ENCODE measurements at regions of chr13 and their contacts with region 1.

Region 1: DNA sequence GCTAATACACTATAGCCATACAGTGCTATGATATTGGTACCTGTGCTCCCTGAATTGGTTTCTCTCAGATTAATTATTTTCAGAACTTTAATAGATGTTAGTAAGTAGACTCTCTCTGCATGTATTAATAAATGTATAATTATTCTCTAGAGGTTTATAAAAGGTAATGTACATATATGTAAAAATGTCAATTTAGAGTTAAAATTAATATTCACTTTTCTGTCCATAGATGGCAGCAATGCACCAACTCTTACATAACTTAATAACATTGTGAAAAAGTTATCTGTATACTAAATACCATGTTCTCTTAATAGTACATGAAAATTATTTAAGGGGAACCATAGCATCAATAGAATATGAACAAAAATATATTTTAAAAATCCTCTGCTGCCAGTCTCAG is 515.0 kb upstream of the KLHL1 start:
- DNase-seq: peak; percentile 57
- H3K4me3 ChIP-seq: no peak overlapping the region
- H3K27ac ChIP-seq: no peak overlapping the region
- H3K4me1 ChIP-seq: no peaks in the 10 kb centered on the region
- H3K27me3 ChIP-seq: no peaks in the 10 kb centered on the region
- CTCF ChIP-seq: no peak
- POLR2A ChIP-seq: no peak

Region 2: GRCh38 chr13:70708775-70709174 is 85.5 kb after region 1 on chr13:
- CTCF ChIA-PET with region 1: no interaction called
- POLR2A ChIA-PET with region 1: no interaction called
- dilution Hi-C with region 1: no loop called
- intact Hi-C with region 1: loop called (anchors 2 kb)
- DNase-seq: peak; percentile 93
- H3K4me3 ChIP-seq: peak overlapping the region in 1 of 3 experiments; percentile 11
- H3K27ac ChIP-seq: peak overlapping the region; percentile 53
- H3K4me1 ChIP-seq: peaks cover 28% of the 10 kb centered on the region
- H3K27me3 ChIP-seq: no peaks in the 10 kb centered on the region
- CTCF ChIP-seq: no peak
- POLR2A ChIP-seq: no peak

Region 3: GRCh38 chr13:70723732-70724131 is 100.5 kb after region 1 on chr13:
- CTCF ChIA-PET with region 1: no interaction called
- POLR2A ChIA-PET with region 1: no interaction called
- dilution Hi-C with region 1: no loop called
- intact Hi-C with region 1: loop called (anchors 5 kb)
- DNase-seq: peak; percentile 62
- H3K4me3 ChIP-seq: no peak overlapping the region
- H3K27ac ChIP-seq: no peak overlapping the region
- H3K4me1 ChIP-seq: no peaks in the 10 kb centered on the region
- H3K27me3 ChIP-seq: no peaks in the 10 kb centered on the region
- CTCF ChIP-seq: peak in 1 of 2 donors; percentile 28
- POLR2A ChIP-seq: no peak

Region 4: GRCh38 chr13:71218960-71219359 is 595.7 kb after region 1 on chr13:
- CTCF ChIA-PET with region 1: no interaction called
- POLR2A ChIA-PET with region 1: no interaction called
- dilution Hi-C with region 1: no loop called
- intact Hi-C with region 1: loop called (anchors 5 kb)
- DNase-seq: peak; percentile 49
- H3K4me3 ChIP-seq: no peak overlapping the region
- H3K27ac ChIP-seq: no peak overlapping the region
- H3K4me1 ChIP-seq: peaks cover 2% of the 10 kb centered on the region
- H3K27me3 ChIP-seq: no peaks in the 10 kb centered on the region
- CTCF ChIP-seq: no peak
- POLR2A ChIP-seq: no peak

Region 5: GRCh38 chr13:71477735-71478134 is 854.5 kb after region 1 on chr13:
- CTCF ChIA-PET with region 1: interaction called, 3 read pairs
- POLR2A ChIA-PET with region 1: no interaction called
- dilution Hi-C with region 1: no loop called
- intact Hi-C with region 1: loop called (anchors 1 kb)
- DNase-seq: no peak
- H3K4me3 ChIP-seq: no peak overlapping the region
- H3K27ac ChIP-seq: no peak overlapping the region
- H3K4me1 ChIP-seq: no peaks in the 10 kb centered on the region
- H3K27me3 ChIP-seq: no peaks in the 10 kb centered on the region
- CTCF ChIP-seq: peak; percentile 13 to 23
- POLR2A ChIP-seq: no peak

Region 6: GRCh38 chr13:71979616-71980015 is 1356.4 kb after region 1 on chr13:
- CTCF ChIA-PET with region 1: interaction called, 3 read pairs
- POLR2A ChIA-PET with region 1: no interaction called
- dilution Hi-C with region 1: no loop called
- intact Hi-C with region 1: loop called (anchors 10 kb)
- DNase-seq: peak; percentile 33
- H3K4me3 ChIP-seq: no peak overlapping the region
- H3K27ac ChIP-seq: no peak overlapping the region
- H3K4me1 ChIP-seq: no peaks in the 10 kb centered on the region
- H3K27me3 ChIP-seq: no peaks in the 10 kb centered on the region
- CTCF ChIP-seq: peak; percentile 13 to 43
- POLR2A ChIP-seq: no peak

Region 7: DNA sequence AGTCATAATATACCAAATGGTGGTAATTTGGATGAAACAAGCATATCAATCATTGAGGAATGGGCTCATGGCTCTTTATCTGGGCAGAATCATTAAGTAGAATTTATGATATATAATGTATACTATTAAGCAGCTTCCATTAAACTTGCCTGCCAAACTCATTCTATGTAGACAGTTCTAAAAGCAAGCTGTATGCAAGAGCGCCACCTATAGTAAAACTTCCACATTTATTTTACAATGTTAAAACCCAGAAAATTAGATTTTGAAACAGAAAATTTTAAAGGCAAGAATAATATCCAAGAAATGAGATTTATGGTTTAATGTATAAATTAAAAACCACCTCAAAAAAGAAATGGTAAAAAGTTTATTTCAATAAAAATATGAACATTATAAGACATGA is 1942.7 kb after region 1 on chr13:
- CTCF ChIA-PET with region 1: interaction called, 10 read pairs
- POLR2A ChIA-PET with region 1: no interaction called
- dilution Hi-C with region 1: no loop called
- intact Hi-C with region 1: loop called (anchors 10 kb)
- DNase-seq: peak; percentile 25
- H3K4me3 ChIP-seq: no peak overlapping the region
- H3K27ac ChIP-seq: no peak overlapping the region
- H3K4me1 ChIP-seq: no peaks in the 10 kb centered on the region
- H3K27me3 ChIP-seq: no peaks in the 10 kb centered on the region
- CTCF ChIP-seq: peak; percentile 28 to 37
- POLR2A ChIP-seq: no peak